Natural killer cell (primary cell): ENCODE measurements at regions of chrX and their contacts with region 1.

Region 1: GRCh38 chrX:56029691-56030090 is 202.5 kb upstream of the KLF8 start:
- DNase-seq: no peak
- ATAC-seq: no peak
- H3K4me3 ChIP-seq: no peak overlapping the region
- H3K4me3 Mint-ChIP-seq: no peak overlapping the region
- H3K27ac ChIP-seq: no peak overlapping the region
- H3K27ac Mint-ChIP-seq: no peak overlapping the region
- H3K4me1 ChIP-seq: no peaks in the 10 kb centered on the region
- H3K4me1 Mint-ChIP-seq: no peaks in the 10 kb centered on the region
- H3K27me3 ChIP-seq: no peaks in the 10 kb centered on the region
- H3K27me3 Mint-ChIP-seq: no peaks in the 10 kb centered on the region
- CTCF ChIP-seq: no peak

Region 2: DNA sequence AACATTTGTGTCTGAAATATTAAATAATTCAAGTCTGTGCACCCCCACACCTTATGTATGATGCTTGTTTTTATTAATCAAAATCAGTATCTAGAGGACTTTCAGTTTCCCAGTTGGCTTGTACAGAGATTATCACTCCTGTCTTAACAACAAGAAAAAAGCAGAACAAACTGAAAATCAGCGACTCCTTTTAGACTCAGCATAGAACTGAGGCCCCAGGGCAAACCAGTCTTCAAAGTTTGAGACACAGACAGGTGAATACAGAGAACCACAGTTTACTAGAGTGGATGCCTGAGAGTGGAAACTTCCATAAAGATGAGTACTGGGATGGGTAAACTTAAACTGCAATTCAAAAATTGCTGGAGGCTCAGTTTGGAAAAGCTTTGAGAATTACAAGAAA is 59.7 kb after region 1 on chrX:
- intact Hi-C with region 1: loop called (anchors 10 kb)
- DNase-seq: no peak
- ATAC-seq: no peak
- H3K4me3 ChIP-seq: no peak overlapping the region
- H3K4me3 Mint-ChIP-seq: no peak overlapping the region
- H3K27ac ChIP-seq: no peak overlapping the region
- H3K27ac Mint-ChIP-seq: no peak overlapping the region
- H3K4me1 ChIP-seq: no peaks in the 10 kb centered on the region
- H3K4me1 Mint-ChIP-seq: no peaks in the 10 kb centered on the region
- H3K27me3 ChIP-seq: no peaks in the 10 kb centered on the region
- H3K27me3 Mint-ChIP-seq: peaks cover 0 to 17% of the 10 kb centered on the region in 2 donors
- CTCF ChIP-seq: no peak